ENCODE measurements at regions of chr14 and their contacts with region 1.

Region 1: GRCh38 chr14:75487155-75487671 is 35.1 kb upstream of the BATF start:
- DNase-seq: peak; percentile 6 to 50 (median 16)
- H3K4me3 ChIP-seq: no peak overlapping the region
- H3K4me3 Mint-ChIP-seq: peak overlapping the region in 3 of 8 donors; percentile 11 to 59 (median 32)
- H3K27ac ChIP-seq: no peak overlapping the region
- H3K27ac Mint-ChIP-seq: peak overlapping the region in 2 of 7 donors; percentile 33 to 57
- H3K4me1 ChIP-seq: peaks cover 14% of the 10 kb centered on the region
- H3K4me1 Mint-ChIP-seq: peaks cover 8 to 20% (median 15%) of the 10 kb centered on the region in 4 donors
- H3K27me3 ChIP-seq: no peaks in the 10 kb centered on the region
- H3K27me3 Mint-ChIP-seq: no peaks in the 10 kb centered on the region

Region 2: DNA sequence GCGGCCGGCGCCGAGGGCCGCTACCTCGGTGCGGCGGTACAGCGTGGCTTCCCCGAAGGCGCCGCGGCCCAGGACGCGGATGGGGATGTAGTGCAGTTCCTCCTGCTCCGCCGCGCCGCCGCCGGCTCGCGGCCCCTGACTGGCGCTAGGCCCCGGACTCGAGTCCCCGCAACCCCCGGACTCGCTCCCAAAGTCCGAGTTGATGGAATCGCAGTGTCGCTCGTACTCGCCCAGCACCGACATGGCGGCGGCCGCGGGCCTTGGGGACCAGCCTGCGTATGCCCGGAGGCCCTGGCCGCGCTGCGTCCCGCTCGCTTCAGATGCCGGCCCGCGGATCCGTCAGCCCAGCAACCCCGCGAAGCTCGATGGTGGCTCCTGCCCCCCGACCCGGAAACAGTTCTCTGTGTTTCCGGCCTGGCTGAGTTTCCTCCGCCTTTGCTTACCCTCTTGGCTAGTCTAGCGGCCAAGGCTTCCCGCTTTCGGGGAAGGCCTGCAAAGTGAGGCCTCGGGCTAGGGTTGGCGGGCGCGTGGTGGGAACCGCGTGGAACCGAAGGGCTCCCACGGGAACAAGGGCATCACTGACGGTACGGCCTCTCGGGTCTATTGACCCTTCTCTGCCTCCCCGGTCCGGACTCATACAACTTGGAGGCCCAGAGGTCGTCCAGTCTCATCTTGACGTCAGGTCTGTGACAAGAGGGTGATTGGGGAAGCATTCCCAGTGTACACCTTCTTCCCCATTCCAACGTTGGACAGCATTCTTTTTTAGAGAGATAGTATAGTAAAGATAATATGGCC is 360.3 kb before region 1 on chr14 and contains the start of gene NEK9:
- CTCF ChIA-PET with region 1: interaction called, 11 read pairs
- POLR2A ChIA-PET with region 1: interaction called, 5 read pairs
- intact Hi-C with region 1: loop called (anchors 2 kb)
- DNase-seq: peak; percentile 86 to 92 (median 90)
- H3K4me3 ChIP-seq: peak within 1 kb of the TSS; percentile 80 to 99
- H3K4me3 Mint-ChIP-seq: peak within 1 kb of the TSS; percentile 88 to 98 (median 97)
- H3K27ac ChIP-seq: peak within 1 kb of the TSS; percentile 94
- H3K27ac Mint-ChIP-seq: peak within 1 kb of the TSS; percentile 95 to 99 (median 99)
- H3K4me1 ChIP-seq: peaks cover 42% of the 10 kb centered on the region
- H3K4me1 Mint-ChIP-seq: peaks cover 29 to 52% (median 34%) of the 10 kb centered on the region in 4 donors
- H3K27me3 ChIP-seq: no peaks in the 10 kb centered on the region
- H3K27me3 Mint-ChIP-seq: no peaks in the 10 kb centered on the region
- total RNA-seq, gene NEK9: 129 to 133 TPM

Region 3: DNA sequence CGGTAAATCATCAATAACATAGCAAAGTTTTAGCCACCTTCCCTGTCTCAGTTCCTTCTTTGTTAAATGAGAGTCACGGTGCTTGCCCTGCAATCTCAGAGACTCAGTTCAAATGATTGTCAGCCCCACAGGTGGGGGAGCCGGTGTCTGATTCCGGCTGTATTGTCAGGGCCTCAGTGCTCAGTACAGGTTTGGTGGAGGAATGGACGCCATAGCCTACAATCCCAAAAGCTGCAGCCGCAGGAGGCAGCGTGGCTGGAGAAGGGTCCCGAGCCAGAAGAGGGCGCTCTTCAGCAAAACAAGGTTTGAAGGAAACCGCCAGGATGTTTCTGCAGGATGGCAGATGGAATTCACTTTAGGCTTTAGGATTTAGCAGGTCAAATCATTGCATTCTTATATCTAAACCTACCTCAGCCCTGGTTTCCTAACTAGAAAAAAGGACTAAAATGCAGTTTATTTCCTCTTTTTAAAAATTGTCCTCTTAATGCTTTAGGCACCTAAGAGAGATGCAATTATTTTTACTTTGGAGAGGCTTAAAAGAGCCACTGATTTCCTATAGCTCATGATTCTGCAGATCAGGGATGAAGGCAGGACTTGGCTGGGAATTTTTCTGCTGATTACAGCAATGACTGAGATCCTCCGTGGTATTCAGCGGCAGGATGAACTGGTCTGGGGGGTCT is 179.4 kb before region 1 on chr14:
- CTCF ChIA-PET with region 1: interaction called, 121 read pairs
- POLR2A ChIA-PET with region 1: no interaction called
- intact Hi-C with region 1: loop called (anchors 1 kb)
- DNase-seq: peak; percentile 56 to 68 (median 63)
- H3K4me3 ChIP-seq: no peak overlapping the region
- H3K4me3 Mint-ChIP-seq: peak overlapping the region in 1 of 8 donors; percentile 26
- H3K27ac ChIP-seq: no peak overlapping the region
- H3K27ac Mint-ChIP-seq: no peak overlapping the region
- H3K4me1 ChIP-seq: peaks cover 6% of the 10 kb centered on the region
- H3K4me1 Mint-ChIP-seq: peaks cover 4 to 19% (median 8%) of the 10 kb centered on the region in 4 donors
- H3K27me3 ChIP-seq: no peaks in the 10 kb centered on the region
- H3K27me3 Mint-ChIP-seq: peaks cover 1 to 3% of the 10 kb centered on the region in 2 donors

Region 4: GRCh38 chr14:75514673-75515628 is 27.7 kb after region 1 on chr14:
- CTCF ChIA-PET with region 1: interaction called, 15 read pairs
- POLR2A ChIA-PET with region 1: interaction called, 10 read pairs
- intact Hi-C with region 1: no loop called
- DNase-seq: peak; percentile 59 to 70 (median 63)
- H3K4me3 ChIP-seq: peak overlapping the region; percentile 45 to 49
- H3K4me3 Mint-ChIP-seq: peak overlapping the region; percentile 88 to 97 (median 94)
- H3K27ac ChIP-seq: peak overlapping the region; percentile 73
- H3K27ac Mint-ChIP-seq: peak overlapping the region; percentile 87 to 99 (median 97)
- H3K4me1 ChIP-seq: peaks cover 33% of the 10 kb centered on the region
- H3K4me1 Mint-ChIP-seq: peaks cover 22 to 51% (median 33%) of the 10 kb centered on the region in 4 donors
- H3K27me3 ChIP-seq: no peaks in the 10 kb centered on the region
- H3K27me3 Mint-ChIP-seq: no peaks in the 10 kb centered on the region

Region 5: DNA sequence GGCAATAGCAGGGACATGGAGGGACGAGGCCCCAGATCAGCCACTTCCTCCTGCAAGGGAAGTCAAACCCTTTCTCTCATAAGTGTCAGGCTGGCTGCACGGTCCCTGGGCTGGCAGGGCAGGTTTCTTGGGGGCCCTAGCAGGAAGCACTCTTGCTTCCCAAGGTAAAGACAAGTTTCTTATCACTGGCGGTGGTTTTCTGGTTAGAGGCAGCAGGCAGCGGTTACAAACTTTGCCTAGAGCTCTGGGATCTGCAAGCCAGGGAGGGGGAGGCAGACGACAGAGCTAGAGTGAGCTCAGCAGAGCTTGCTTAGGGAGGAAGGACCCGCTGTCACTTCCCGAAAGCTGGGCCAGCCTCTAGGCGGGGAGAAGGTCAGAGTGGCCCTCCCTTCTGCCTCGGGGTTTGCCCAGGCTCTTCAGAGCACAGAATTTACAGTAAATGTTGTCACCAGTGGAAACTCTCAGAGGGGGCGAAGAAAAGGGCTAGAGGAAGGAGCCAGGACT is 55.4 kb after region 1 on chr14:
- CTCF ChIA-PET with region 1: interaction called, 13 read pairs
- POLR2A ChIA-PET with region 1: interaction called, 4 read pairs
- intact Hi-C with region 1: no loop called
- DNase-seq: peak; percentile 67 to 93 (median 71)
- H3K4me3 ChIP-seq: peak overlapping the region; percentile 34 to 42
- H3K4me3 Mint-ChIP-seq: peak overlapping the region; percentile 66 to 89 (median 82)
- H3K27ac ChIP-seq: peak overlapping the region; percentile 94
- H3K27ac Mint-ChIP-seq: peak overlapping the region; percentile 96 to 99 (median 97)
- H3K4me1 ChIP-seq: peaks cover 71% of the 10 kb centered on the region
- H3K4me1 Mint-ChIP-seq: peaks cover 48 to 79% (median 67%) of the 10 kb centered on the region in 4 donors
- H3K27me3 ChIP-seq: no peaks in the 10 kb centered on the region
- H3K27me3 Mint-ChIP-seq: no peaks in the 10 kb centered on the region

Region 6: DNA sequence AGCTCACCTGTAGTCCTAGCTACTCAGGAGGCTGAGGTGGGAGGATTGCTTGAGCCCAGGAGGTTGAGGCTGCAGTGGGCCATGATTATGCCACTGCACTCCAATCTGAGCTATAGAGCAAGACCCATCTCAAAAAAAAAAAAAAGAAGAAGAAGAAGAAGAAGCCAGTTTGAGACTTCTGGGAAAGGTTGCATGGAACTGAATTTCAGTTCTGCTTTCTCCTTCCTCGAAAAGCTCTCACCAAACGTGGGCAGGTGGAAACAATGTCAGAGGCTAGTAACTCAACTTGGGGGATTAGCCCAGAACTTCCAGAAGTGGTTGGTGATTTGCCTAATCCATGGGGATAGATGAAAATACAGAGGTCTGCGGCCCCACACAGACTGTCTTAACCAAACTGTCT is 109.9 kb after region 1 on chr14:
- CTCF ChIA-PET with region 1: no interaction called
- POLR2A ChIA-PET with region 1: no interaction called
- intact Hi-C with region 1: no loop called
- DNase-seq: no peak
- H3K4me3 ChIP-seq: no peak overlapping the region
- H3K4me3 Mint-ChIP-seq: no peak overlapping the region
- H3K27ac ChIP-seq: no peak overlapping the region
- H3K27ac Mint-ChIP-seq: no peak overlapping the region
- H3K4me1 ChIP-seq: no peaks in the 10 kb centered on the region
- H3K4me1 Mint-ChIP-seq: no peaks in the 10 kb centered on the region
- H3K27me3 ChIP-seq: no peaks in the 10 kb centered on the region
- H3K27me3 Mint-ChIP-seq: no peaks in the 10 kb centered on the region